ENCODE measurements at regions of chr20 and their contacts with region 1.

Region 1: GRCh38 chr20:4813863-4814695 is 92.4 kb downstream of the PRND start:
- DNase-seq: peak; percentile 72
- H3K4me3 Mint-ChIP-seq: peak overlapping the region; percentile 93
- H3K27ac Mint-ChIP-seq: peak overlapping the region; percentile 98
- H3K4me1 Mint-ChIP-seq: peaks cover 72% of the 10 kb centered on the region
- H3K27me3 Mint-ChIP-seq: no peaks in the 10 kb centered on the region

Region 2: DNA sequence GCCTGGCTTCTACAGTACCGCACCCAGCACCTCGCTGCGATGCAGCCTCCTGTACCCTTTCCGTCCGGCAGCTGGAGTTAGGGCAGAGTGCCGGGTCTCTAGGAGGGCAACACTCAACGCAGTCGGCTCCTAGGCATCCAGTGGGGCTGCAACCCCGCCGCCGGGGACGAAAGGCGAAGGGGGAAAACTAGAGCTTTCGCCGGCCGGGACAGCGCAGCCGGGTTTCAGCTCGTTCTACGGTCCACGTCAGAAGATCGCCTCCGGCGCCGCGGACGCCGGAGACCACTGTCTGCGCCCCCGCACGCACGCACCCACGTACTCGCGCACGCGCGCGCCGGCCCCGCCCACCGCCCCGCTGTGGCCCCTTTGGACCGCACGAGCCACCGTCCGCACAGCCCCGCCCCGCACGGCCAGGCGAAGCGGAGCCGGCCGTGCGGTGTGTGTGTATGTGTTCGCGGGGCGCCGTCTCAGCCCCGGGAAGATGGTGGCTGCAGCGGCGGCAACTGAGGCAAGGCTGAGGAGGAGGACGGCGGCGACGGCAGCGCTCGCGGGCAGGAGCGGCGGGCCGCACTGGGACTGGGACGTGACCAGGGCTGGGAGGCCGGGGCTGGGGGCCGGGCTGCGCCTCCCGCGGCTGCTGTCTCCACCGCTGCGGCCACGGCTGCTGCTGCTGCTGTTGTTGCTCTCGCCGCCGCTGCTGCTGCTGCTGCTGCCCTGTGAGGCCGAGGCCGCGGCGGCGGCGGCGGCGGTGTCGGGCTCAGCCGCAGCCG is 1343.3 kb before region 1 on chr20 and contains the start of gene ATRN:
- CTCF ChIA-PET with region 1: no interaction called
- intact Hi-C with region 1: loop called (anchors 5 kb)
- DNase-seq: peak; percentile 88
- H3K4me3 Mint-ChIP-seq: peak within 1 kb of the TSS; percentile 86
- H3K27ac Mint-ChIP-seq: no peak within 1 kb of the TSS
- H3K4me1 Mint-ChIP-seq: peaks cover 29% of the 10 kb centered on the region
- H3K27me3 Mint-ChIP-seq: no peaks in the 10 kb centered on the region
- total RNA-seq, gene ATRN: 5.1 TPM

Region 3: GRCh38 chr20:4787069-4787468 is 27.0 kb before region 1 on chr20:
- CTCF ChIA-PET with region 1: no interaction called
- intact Hi-C with region 1: no loop called
- DNase-seq: no peak
- H3K4me3 Mint-ChIP-seq: no peak overlapping the region
- H3K27ac Mint-ChIP-seq: peak overlapping the region; percentile 17
- H3K4me1 Mint-ChIP-seq: peaks cover 5% of the 10 kb centered on the region
- H3K27me3 Mint-ChIP-seq: no peaks in the 10 kb centered on the region

Region 4: DNA sequence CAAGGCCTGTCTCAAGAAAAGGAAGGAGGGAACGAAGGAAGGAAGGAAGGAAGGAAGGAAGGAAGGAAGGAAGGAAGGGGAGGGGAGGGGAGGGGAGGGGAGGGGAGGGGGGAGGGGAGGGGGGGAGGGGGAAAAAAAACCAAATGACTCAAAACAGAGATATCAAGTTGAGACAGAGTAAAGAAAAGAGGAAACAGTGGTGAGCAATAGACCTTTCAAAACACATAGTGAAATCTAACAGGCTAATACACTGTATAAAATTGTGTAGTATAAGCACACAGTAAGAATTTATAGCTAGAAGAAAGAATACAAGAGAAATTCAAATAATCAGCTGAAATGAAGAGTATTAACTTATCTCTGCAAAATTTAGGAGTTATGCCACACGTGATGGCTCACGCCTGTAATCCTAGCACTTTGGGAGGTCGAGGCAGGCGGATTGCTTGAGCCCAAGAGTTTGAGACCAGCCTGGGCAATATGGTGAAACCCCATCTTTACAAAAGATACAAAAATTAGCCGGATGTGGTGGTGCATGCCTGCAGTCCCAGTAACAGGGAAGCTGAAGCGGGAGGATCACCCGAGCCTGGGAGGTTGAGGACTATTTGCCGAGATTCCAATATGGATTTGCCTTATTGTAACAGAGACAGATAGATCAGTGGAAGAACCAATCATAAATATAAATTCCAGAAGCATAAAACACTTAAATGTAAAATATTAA is 30.8 kb after region 1 on chr20:
- CTCF ChIA-PET with region 1: no interaction called
- intact Hi-C with region 1: loop called (anchors 1 kb)
- DNase-seq: no peak
- H3K4me3 Mint-ChIP-seq: no peak overlapping the region
- H3K27ac Mint-ChIP-seq: no peak overlapping the region
- H3K4me1 Mint-ChIP-seq: peaks cover 8% of the 10 kb centered on the region
- H3K27me3 Mint-ChIP-seq: no peaks in the 10 kb centered on the region

Region 5: GRCh38 chr20:5001174-5002076 is 187.3 kb after region 1 on chr20 and contains the start of gene SLC23A2:
- CTCF ChIA-PET with region 1: no interaction called
- intact Hi-C with region 1: loop called (anchors 2 kb)
- DNase-seq: peak; percentile 60
- H3K4me3 Mint-ChIP-seq: peak within 1 kb of the TSS; percentile 87
- H3K27ac Mint-ChIP-seq: peak within 1 kb of the TSS; percentile 79
- H3K4me1 Mint-ChIP-seq: peaks cover 30% of the 10 kb centered on the region
- H3K27me3 Mint-ChIP-seq: no peaks in the 10 kb centered on the region
- total RNA-seq, gene SLC23A2: 16.4 to 18.1 TPM

Measured in activated naive CD4-positive, alpha-beta T cell treated with anti-CD3 and anti-CD28 coated beads for 36 hours (primary cell).